ENCODE measurements at regions of chr3 and their contacts with region 1.

Region 1: DNA sequence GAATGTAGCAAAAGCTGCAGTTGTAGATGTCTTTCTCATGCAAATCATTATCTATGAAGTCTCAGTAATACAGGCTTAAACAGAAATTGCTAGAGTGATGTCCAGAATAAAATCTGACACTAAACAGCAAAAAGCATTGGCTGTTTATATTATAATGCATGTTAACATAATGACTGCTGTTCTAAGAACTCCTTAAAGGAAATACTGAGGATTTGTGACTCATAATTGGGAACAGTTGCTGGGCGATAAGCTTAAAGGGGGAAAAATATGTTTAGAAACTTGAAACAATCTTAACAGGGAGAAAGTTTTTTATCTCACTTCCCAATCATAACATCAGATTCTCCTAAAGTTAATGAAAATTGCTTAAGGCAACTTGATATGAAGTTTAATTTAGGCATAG is 17.5 kb downstream of the TIPARP start:
- DNase-seq: peak; percentile 91
- H3K4me3 ChIP-seq: peak overlapping the region in 1 of 3 experiments; percentile 64
- H3K27ac ChIP-seq: peak overlapping the region; percentile 85
- H3K4me1 ChIP-seq: peaks cover 58% of the 10 kb centered on the region
- H3K27me3 ChIP-seq: no peaks in the 10 kb centered on the region
- CTCF ChIP-seq: no peak
- POLR2A ChIP-seq: peak; percentile 63

Region 2: DNA sequence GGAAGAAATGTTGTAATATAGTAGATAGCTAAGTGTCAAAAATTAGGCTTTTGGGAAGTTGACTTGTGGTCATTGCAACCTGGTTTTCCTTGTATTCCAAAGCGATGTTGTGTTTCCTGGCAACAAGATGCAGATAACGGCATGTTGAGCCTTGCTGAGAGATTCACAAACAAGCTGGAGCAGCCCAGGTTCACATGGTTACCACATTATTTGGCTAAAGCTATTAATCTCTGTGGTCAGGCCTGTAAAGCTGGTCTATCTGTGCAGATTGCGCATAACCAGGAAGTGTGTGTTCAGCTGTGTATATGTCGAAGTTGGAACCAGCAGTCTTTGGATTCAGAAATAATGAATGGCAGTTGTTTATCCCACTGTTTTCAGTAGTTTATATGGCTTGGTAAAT is 10.9 kb before region 1 on chr3:
- CTCF ChIA-PET with region 1: interaction called, 14 read pairs
- POLR2A ChIA-PET with region 1: interaction called, 3 read pairs
- dilution Hi-C with region 1: no loop called
- intact Hi-C with region 1: loop called (anchors 1 kb)
- DNase-seq: peak; percentile 64
- H3K4me3 ChIP-seq: no peak overlapping the region
- H3K27ac ChIP-seq: peak overlapping the region; percentile 30
- H3K4me1 ChIP-seq: peaks cover 68% of the 10 kb centered on the region
- H3K27me3 ChIP-seq: no peaks in the 10 kb centered on the region
- CTCF ChIP-seq: no peak
- POLR2A ChIP-seq: no peak

Region 3: DNA sequence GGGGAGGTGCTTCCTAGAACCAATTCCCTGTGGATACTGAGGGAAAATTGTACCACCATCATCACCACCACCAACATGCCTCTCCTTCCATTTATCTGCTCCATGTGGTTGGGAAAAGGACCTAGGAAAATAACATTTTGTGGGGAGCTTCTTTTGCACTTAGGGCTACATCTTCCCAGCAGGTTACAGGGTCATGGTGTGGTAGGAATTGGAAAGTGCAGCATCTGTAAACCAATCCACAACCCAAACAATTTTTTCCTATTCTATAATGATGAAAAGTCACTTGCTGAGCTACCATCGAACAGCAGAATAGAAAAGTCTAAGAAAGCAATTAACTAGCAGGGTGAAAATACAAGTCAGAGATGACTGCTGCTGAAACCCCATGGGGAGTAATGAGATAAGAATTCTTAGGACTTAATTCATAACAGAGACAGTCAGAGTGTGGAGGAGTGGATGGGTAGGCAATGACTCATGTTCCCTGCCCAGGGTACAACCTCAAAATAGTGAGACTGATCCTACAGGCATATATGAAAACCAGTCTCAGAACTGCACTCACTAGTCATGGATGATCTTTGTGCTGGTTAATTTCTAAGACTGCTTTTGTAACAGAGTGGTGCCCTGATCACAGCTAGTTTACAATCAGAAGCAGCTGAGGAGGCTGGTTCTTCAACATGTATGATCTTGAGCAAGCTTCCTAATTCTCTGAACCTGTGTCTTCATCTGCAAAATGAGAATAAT is 96.2 kb after region 1 on chr3:
- CTCF ChIA-PET with region 1: no interaction called
- POLR2A ChIA-PET with region 1: interaction called, 3 read pairs
- dilution Hi-C with region 1: no loop called
- intact Hi-C with region 1: loop called (anchors 1 kb)
- DNase-seq: peak; percentile 43
- H3K4me3 ChIP-seq: no peak overlapping the region
- H3K27ac ChIP-seq: peak overlapping the region; percentile 61
- H3K4me1 ChIP-seq: peaks cover 40% of the 10 kb centered on the region
- H3K27me3 ChIP-seq: no peaks in the 10 kb centered on the region
- CTCF ChIP-seq: no peak
- POLR2A ChIP-seq: no peak

Region 4: DNA sequence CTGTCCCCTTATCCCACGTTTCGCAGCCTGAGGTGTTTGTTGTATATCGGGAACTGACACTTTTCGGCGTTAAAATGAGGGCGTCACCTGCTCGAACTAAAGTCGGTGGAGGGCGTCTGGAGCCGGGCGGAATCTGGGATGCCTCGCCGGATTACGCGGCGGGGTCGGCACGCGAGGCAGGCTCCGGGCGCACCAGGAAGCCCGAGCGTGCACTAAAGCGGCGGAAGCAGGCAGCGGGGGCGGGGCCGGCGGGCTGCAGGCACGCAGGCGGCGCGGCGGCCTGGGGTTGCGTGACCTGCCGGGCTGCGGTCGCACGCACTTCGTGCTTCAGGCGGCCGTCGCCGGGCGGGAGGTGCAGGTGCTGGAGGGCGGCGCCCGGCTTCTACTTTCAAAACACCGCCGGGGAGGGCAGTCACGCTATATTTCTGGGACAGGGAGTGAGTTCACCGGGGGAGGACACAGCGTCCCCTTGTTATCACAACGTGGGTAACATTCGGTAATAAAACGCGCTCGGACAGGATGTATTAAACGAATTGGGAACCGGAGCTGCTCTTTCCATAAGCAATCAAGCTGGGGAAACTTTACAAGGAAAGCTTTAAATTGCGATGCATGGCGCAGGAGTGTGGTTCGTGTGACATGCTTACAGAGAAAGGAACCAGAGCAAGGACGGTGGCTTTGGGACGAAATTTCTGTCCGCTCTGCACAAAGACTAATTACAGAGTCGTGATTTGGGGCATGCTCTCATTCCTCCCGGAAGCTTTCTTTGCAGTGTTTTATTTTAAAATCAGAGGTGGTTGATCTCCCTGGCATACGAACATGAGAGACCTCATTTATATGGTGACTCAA is 125.1 kb after region 1 on chr3:
- CTCF ChIA-PET with region 1: interaction called, 4 read pairs
- POLR2A ChIA-PET with region 1: no interaction called
- dilution Hi-C with region 1: no loop called
- intact Hi-C with region 1: loop called (anchors 2 kb)
- DNase-seq: peak; percentile 86
- H3K4me3 ChIP-seq: peak overlapping the region in 2 of 3 experiments; percentile 37
- H3K27ac ChIP-seq: peak overlapping the region; percentile 91
- H3K4me1 ChIP-seq: peaks cover 56% of the 10 kb centered on the region
- H3K27me3 ChIP-seq: no peaks in the 10 kb centered on the region
- CTCF ChIP-seq: no peak
- POLR2A ChIP-seq: no peak

Region 5: GRCh38 chr3:156826144-156826895 is 134.4 kb after region 1 on chr3 and contains the start of gene LEKR1:
- CTCF ChIA-PET with region 1: no interaction called
- POLR2A ChIA-PET with region 1: no interaction called
- dilution Hi-C with region 1: no loop called
- intact Hi-C with region 1: loop called (anchors 1 kb)
- DNase-seq: peak; percentile 89
- H3K4me3 ChIP-seq: peak within 1 kb of the TSS; percentile 45 to 90 (median 55)
- H3K27ac ChIP-seq: peak within 1 kb of the TSS; percentile 100
- H3K4me1 ChIP-seq: peaks cover 20% of the 10 kb centered on the region
- H3K27me3 ChIP-seq: no peaks in the 10 kb centered on the region
- CTCF ChIP-seq: no peak
- POLR2A ChIP-seq: peak; percentile 53
- total RNA-seq, gene LEKR1: 0.21 and 0.64 TPM in 2 replicates

Measured in endothelial cell of umbilical vein (primary cell).